AG04449 (cell line): ENCODE measurements at regions of chr4 and their contacts with region 1.

Region 1: DNA sequence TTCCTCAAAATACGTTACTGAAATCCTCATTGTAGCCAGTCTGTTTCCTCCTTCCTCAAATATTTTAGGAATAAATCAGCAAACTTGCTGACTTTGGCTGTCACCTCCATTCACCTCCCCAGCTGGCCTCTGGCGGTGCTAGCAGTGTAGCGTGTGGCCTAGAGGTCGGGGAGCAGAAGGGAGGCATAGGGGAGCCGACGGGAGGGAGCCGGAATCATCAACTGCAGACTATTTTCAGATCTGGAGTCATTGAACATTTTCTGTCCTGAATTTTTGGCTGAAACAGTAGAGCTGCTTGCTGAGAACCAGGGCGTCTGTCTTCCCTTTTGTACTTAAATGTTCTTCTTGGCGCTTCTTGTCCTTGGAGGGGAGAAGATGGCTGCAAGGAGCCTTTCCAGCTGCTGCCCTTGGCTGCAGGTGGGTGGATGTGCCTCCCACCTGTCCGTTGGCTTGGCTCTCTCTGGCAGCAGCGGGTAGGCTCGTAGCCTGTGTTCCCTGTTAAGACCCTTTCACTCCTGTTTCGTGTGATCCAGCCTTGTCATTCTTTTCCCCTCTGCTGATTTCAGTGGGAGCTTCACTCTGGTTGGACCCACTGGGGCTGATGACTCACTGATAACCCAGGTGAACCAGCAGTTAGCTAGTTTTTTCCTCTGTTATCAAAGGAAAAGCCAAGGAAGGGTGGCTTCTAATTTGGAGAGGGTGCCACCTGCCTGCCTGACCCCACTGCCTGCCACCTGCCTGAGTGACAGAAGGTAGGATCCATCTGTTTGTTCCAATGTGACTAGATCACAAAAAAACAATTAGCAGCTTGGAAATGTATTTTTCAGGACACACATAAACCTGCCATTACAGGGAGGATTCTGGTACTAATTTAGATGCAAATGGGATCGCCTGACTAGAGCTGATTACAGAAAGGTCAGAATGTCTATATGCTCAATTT is 135.9 kb downstream of the GATB start:
- DNase-seq: no peak
- H3K4me3 ChIP-seq: no peak overlapping the region
- CTCF ChIP-seq: no peak

Region 2: GRCh38 chr4:151567056-151567455 is 57.8 kb before region 1 on chr4:
- CTCF ChIA-PET with region 1: no interaction called
- POLR2A ChIA-PET with region 1: no interaction called
- DNase-seq: no peak
- H3K4me3 ChIP-seq: no peak overlapping the region
- CTCF ChIP-seq: no peak

Region 3: GRCh38 chr4:151644622-151645021 is 19.7 kb after region 1 on chr4:
- CTCF ChIA-PET with region 1: interaction called, 10 read pairs
- POLR2A ChIA-PET with region 1: no interaction called
- DNase-seq: no peak
- H3K4me3 ChIP-seq: no peak overlapping the region
- CTCF ChIP-seq: peak; percentile 44

Region 4: GRCh38 chr4:151865312-151865711 is 240.4 kb after region 1 on chr4:
- CTCF ChIA-PET with region 1: no interaction called
- POLR2A ChIA-PET with region 1: no interaction called
- DNase-seq: no peak
- H3K4me3 ChIP-seq: no peak overlapping the region
- CTCF ChIP-seq: no peak